Dorsolateral prefrontal cortex (tissue), 120 donors: ENCODE measurements at regions of chr4 and their contacts with region 1.

Region 1: GRCh38 chr4:15396157-15396800 is 31.6 kb upstream of the C1QTNF7 start:
- DNase-seq: peak in 3 of 10 donors; percentile 28 to 35 (median 28)
- H3K4me3 ChIP-seq: no peak overlapping the region
- H3K27ac ChIP-seq: no peak overlapping the region
- H3K27me3 ChIP-seq: peaks cover 0 to 2% (median 0%) of the 10 kb centered on the region in 45 donors
- CTCF ChIP-seq: peak; percentile 35 to 75 (median 64)

Region 2: GRCh38 chr4:15197005-15197404 is 199.3 kb before region 1 on chr4:
- intact Hi-C with region 1: no loop called
- DNase-seq: no peak
- H3K4me3 ChIP-seq: no peak overlapping the region
- H3K27ac ChIP-seq: no peak overlapping the region
- H3K27me3 ChIP-seq: no peaks in the 10 kb centered on the region
- CTCF ChIP-seq: peak in 45 of 56 donors; percentile 10 to 59 (median 37)

Region 3: DNA sequence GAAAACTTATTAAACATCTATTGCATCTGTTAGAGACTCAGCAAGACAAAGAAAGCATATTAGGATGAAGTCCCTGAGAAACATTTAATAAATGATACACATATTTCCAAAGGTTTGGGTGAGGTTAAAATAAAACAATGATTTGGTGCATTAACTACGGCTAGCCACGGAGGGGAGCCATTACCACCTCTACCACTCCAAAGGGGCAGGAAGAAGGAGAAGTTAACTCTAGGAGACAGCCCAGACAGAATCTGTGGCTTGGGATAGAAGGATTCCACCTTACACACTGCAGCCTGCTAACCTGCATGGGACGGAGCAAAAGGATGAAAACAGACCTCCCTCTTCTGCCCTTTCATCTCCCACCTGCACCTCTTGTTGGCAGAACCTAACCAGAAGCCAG is 157.6 kb before region 1 on chr4:
- intact Hi-C with region 1: loop called (anchors 5 to 10 kb)
- DNase-seq: no peak
- H3K4me3 ChIP-seq: no peak overlapping the region
- H3K27ac ChIP-seq: no peak overlapping the region
- H3K27me3 ChIP-seq: no peaks in the 10 kb centered on the region
- CTCF ChIP-seq: peak in 52 of 56 donors; percentile 16 to 69 (median 48)

Region 4: DNA sequence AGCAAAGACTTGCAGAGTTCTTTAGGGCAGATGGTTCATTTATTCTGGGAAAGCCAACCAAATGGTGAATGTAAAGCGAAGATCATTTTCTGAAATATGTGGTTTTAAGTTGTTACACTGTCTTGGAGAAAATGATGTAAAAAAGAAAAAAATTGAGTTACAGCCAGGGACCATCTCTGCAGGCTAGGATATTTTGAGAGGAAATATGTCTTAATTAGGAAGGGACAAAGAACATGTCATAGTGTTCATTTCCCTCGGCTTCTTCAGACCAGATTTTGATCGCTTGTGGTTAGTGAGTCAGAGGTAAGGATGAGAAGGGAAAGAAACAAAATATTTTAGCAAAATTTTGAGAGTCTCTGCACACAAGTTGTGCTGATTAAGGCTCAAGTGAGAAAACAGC is 27.4 kb before region 1 on chr4:
- intact Hi-C with region 1: no loop called
- DNase-seq: no peak
- H3K4me3 ChIP-seq: no peak overlapping the region
- H3K27ac ChIP-seq: no peak overlapping the region
- H3K27me3 ChIP-seq: no peaks in the 10 kb centered on the region
- CTCF ChIP-seq: no peak